Heart left ventricle (tissue), 16 donors: ENCODE measurements at regions of chr13 and their contacts with region 1.

Region 1: DNA sequence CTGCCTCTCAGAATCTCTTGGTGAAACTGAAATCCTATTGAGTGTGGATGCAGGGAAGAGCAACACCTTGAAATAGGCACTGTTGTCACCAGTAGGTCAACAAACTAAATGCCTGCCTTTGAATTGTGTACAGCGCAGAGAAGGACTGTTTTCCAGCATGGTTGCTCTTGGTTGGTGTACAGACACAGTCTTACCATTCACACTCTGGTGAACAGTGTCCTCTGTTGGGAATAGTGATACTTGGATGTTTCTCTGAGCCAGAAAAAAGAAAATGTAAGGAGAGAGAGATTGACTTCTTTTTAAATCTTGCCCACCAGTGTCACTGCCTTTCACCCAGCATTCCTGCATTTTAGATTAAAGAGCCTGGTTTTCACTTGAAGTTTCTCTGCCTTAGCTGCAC is 179.7 kb downstream of the STK24 start:
- DNase-seq: no peak
- ATAC-seq: peak in 2 of 4 donors; percentile 55 to 64
- H3K4me3 ChIP-seq: no peak overlapping the region
- H3K27ac ChIP-seq: no peak overlapping the region
- H3K4me1 ChIP-seq: peaks cover 0 to 4% (median 0%) of the 10 kb centered on the region in 12 donors
- H3K27me3 ChIP-seq: no peaks in the 10 kb centered on the region
- CTCF ChIP-seq: peak in 9 of 12 donors; percentile 18 to 55 (median 42)
- POLR2A ChIP-seq: no peak

Region 2: DNA sequence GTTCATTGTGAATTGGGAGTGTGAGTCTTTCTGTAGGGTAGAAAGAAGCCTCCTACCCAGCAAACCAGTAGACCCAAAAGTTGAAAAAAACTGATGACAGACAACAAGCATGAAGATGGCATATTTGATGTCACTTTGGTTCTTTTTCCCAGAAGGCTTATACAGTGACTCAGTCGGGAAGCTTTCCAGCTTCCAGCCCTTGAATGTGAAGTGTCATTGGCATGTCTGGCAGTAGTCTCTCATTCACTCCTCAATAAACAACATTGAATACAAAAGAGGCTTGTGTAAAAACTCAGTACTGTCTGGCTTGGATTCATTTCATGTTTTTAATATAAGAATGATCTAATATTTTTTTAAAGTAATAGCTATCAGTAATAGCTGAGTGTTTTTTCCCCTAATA is 375.0 kb before region 1 on chr13:
- intact Hi-C with region 1: loop called in 2 of 10 experiments (anchors 10 kb)
- DNase-seq: peak in 2 of 5 donors; percentile 35 to 52
- ATAC-seq: peak; percentile 78 to 88 (median 82)
- H3K4me3 ChIP-seq: no peak overlapping the region
- H3K27ac ChIP-seq: peak overlapping the region in 3 of 12 donors; percentile 4 to 47 (median 42)
- H3K4me1 ChIP-seq: peaks cover 0 to 15% (median 5%) of the 10 kb centered on the region in 12 donors
- H3K27me3 ChIP-seq: no peaks in the 10 kb centered on the region
- CTCF ChIP-seq: no peak
- POLR2A ChIP-seq: no peak

Region 3: GRCh38 chr13:98033277-98034247 is 363.7 kb before region 1 on chr13:
- intact Hi-C with region 1: loop called in 4 of 10 experiments (anchors 10 kb)
- DNase-seq: peak in 1 of 5 donors; percentile 25
- ATAC-seq: peak in 1 of 4 donors; percentile 36
- H3K4me3 ChIP-seq: no peak overlapping the region
- H3K27ac ChIP-seq: no peak overlapping the region
- H3K4me1 ChIP-seq: no peaks in the 10 kb centered on the region
- H3K27me3 ChIP-seq: no peaks in the 10 kb centered on the region
- CTCF ChIP-seq: peak in 10 of 12 donors; percentile 21 to 60 (median 48)
- POLR2A ChIP-seq: no peak